Activated CD4-positive, alpha-beta T cell treated with anti-CD3 and anti-CD28 coated beads, Interleukin-2, amount 10 ng/mL, durations not matched to agents 24 days and 14 days (primary cell): ENCODE measurements at regions of chr6 and their contacts with region 1.

Region 1: DNA sequence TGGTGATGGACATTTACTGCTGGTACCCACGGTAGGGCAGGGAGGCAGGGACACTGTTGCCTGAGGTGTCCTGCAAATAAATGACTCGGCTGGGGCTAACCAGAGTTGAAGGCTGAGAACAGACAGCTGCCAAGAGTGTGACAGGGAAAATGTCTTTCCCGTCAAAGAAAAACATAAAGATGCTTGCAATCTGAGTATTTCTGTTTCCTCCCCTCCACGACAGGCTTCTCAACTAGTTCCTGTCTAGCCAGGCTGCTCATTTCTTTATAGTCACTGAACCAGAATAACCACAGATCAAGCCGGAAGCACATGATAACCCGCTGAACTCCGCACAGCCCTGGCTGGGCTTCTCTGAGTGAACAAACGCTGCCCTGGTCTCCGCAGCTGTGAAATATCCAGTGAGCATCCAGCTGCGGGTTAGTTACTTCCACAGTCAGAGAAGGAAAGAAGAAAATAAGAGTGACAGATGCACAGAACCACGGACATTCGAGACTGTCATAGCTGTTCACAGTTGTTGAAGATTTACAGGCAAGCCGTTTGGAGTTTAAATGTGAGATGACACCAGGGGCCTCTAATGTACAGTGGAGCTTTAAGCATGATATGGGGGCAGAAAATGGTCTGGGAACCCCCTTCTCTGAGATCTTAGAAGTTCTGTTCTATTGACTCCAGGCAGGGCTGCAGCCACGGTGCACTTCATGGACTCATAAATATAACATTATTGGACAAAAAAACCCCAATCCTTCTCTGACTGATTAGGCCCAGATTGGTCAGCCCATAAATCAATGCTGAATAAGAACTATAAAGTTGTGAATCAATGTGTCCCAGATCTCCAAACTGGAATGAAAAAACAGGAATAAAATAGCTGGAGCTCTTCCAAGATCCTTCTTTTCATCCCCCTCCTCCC is 299.9 kb upstream of the SUPT3H start:
- DNase-seq: peak; percentile 87
- H3K4me3 Mint-ChIP-seq: peak overlapping the region; percentile 79
- H3K27ac Mint-ChIP-seq: peak overlapping the region; percentile 79
- H3K4me1 Mint-ChIP-seq: peaks cover 33% of the 10 kb centered on the region
- H3K27me3 Mint-ChIP-seq: no peaks in the 10 kb centered on the region

Region 2: DNA sequence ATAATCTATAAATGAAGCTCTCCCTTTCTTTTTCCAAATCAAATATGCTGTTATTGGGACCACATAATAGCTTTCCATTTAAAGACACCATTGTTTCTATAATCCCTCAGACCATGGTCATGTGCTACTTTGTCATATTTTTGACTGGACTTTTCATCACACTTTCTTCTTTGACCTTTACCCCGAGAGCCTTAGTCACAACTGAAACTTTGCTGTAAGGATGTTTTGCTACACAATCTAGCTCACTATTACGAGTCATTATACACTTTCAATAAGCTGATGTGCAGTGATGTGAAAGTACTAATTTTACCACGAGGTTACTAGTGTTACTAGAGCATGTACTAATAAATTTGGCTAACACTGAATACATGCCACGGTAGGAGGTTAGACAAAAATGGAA is 716.7 kb before region 1 on chr6:
- intact Hi-C with region 1: no loop called
- DNase-seq: no peak
- H3K4me3 Mint-ChIP-seq: peak overlapping the region; percentile 11
- H3K27ac Mint-ChIP-seq: peak overlapping the region; percentile 71
- H3K4me1 Mint-ChIP-seq: peaks cover 8% of the 10 kb centered on the region
- H3K27me3 Mint-ChIP-seq: no peaks in the 10 kb centered on the region

Region 3: GRCh38 chr6:45350186-45350710 is 327.4 kb before region 1 on chr6:
- intact Hi-C with region 1: no loop called
- DNase-seq: no peak
- H3K4me3 Mint-ChIP-seq: no peak overlapping the region
- H3K27ac Mint-ChIP-seq: no peak overlapping the region
- H3K4me1 Mint-ChIP-seq: peaks cover 14% of the 10 kb centered on the region
- H3K27me3 Mint-ChIP-seq: no peaks in the 10 kb centered on the region

Region 4: DNA sequence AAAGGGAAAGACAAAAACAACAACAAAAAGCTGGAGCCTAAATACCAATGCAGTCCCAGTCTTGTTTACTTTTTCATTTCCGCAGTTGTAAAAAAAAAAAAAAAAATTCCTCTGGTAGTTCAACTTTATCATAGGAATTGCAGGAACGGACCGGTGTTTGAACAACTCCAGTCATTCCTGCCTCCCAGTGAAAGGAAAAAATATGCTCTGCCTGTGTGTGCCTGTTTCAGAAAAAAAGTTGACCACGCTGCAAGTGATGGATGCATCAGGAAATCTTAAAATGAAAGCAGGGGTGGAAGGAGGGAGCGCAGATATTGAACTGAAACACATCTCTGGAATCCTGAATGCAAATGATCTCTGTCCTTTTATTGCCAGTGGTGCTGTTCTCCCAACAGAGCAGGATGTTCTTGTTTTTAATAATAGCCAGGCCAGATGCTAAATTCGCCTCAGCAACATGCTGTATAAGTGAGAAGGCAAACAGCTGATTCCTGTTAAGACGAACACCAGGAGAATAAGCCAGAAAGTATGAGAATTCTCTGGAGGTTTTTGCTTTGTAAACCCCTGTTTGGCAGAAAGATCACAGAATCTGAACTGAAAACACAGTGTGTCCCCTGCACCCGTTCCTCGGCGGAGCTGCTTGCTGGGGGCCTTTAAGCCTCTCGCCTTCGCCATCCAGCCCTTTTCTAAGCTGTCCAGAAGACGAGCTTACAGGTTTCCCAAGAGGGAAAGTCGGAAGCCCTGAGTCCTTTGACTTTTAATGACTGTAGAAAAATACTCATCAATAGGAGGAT is 121.5 kb before region 1 on chr6:
- intact Hi-C with region 1: no loop called
- DNase-seq: no peak
- H3K4me3 Mint-ChIP-seq: no peak overlapping the region
- H3K27ac Mint-ChIP-seq: no peak overlapping the region
- H3K4me1 Mint-ChIP-seq: peaks cover 41% of the 10 kb centered on the region
- H3K27me3 Mint-ChIP-seq: no peaks in the 10 kb centered on the region

Region 5: DNA sequence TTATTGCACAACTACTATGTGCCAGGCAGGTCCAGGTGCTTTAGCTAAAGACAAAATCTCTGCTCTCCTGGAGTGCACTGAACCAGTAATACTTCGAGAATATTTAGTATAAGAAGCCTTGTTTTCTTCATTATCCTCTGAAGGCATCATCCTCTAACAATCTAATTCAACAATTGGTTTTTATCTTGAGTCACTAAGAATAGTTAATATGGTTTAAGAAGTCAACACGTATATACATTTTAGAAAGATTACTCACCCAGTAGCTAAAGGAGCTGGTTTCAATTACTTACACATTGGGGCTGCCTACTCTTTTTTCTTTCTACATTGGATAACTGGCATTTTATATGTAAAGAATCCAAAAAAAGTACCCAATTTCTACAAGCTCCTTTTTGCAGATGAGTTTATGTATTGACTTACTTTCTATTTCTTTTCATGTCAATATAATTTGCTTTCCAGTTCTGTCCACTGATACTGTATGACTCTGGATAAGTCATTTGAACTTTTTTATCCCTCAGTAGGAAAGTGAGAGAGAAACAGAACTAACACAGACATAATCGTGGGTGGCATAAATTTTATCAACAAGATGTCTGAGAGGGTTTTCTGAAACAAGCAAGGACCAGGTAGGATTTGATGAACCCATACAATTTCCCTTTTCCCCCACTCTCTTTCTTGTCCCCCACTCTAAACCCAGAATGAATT is 25.6 kb after region 1 on chr6:
- intact Hi-C with region 1: loop called (anchors 2 kb)
- DNase-seq: no peak
- H3K4me3 Mint-ChIP-seq: no peak overlapping the region
- H3K27ac Mint-ChIP-seq: peak overlapping the region; percentile 75
- H3K4me1 Mint-ChIP-seq: peaks cover 26% of the 10 kb centered on the region
- H3K27me3 Mint-ChIP-seq: no peaks in the 10 kb centered on the region

Region 6: DNA sequence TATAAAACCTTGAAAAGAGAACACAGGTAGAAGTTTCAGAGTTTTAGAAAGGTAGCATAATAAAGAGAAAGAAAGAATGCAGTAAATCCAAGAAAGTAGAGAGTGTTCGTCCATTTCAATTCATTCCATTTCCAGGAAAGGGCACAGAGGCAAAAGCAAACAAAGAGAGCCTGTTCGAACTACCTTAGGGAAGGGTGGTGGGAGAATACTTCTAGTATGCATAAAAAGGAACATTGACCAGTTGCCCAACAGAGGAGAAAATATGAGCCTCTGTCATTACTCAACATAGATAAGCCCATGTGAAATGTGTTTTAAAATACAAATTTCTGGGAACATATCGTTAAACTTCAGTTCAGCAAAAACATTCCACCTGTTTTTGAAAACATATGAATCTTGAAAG is 914.4 kb after region 1 on chr6:
- intact Hi-C with region 1: no loop called
- DNase-seq: no peak
- H3K4me3 Mint-ChIP-seq: no peak overlapping the region
- H3K27ac Mint-ChIP-seq: no peak overlapping the region
- H3K4me1 Mint-ChIP-seq: no peaks in the 10 kb centered on the region
- H3K27me3 Mint-ChIP-seq: peaks cover 13% of the 10 kb centered on the region